AG04450 (cell line): ENCODE measurements at regions of chr5 and their contacts with region 1.

Region 1: GRCh38 chr5:141691867-141692532 is 10.0 kb upstream of the ARAP3 start:
- DNase-seq: peak; percentile 38
- H3K4me3 ChIP-seq: peak overlapping the region; percentile 59
- H3K27ac ChIP-seq: no peak overlapping the region
- H3K27me3 ChIP-seq: peaks cover 38% of the 10 kb centered on the region
- CTCF ChIP-seq: peak; percentile 97

Region 2: DNA sequence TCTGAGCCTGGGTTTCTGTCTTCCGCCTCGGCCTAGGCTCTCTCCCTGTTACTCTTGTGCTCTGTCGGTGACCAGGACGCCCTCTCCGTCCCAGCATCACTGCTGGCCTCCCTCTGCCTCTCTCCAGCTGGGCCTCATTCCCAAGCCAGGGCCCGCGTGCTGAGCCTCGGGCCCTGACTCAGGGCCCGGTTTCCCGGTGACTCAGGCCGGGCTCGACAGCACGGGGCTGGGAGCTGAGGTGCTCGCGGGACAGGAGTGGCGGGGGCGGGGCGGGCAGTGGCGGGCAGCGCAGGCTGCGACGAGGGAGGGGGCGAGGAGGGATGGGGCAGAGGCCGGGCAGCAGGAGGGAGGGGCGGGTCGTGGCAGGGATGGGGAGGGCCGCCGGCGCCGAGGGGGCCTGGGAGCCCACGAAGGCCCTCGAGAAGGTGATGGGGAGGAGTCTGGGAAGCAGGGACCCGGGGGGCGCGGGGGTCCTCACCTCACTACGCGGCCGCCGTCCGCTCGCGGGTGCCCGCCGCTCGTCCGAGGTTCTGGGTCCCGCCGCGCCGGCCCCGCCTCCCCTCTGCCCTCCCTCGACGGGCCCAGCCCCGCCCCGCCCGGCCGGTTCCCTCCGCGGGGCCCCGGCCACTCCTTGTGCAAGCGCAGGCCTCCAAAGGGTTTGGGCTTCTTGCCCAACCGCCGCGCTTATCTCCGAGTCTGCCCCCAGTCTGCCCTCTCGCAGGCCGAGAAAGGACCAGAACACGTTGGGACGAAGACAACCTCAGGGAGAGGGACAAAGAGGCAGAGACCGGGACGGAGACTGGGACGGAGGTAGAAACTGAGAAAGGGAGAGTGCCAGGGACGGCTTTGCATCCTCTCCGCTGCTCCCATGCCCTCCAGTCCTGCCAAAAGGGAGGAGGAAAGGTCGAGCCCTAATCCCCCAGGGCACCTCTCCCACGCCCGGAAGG is 10.0 kb before region 1 on chr5 and contains the start of gene ARAP3:
- CTCF ChIA-PET with region 1: interaction called, 31 read pairs
- POLR2A ChIA-PET with region 1: no interaction called
- DNase-seq: peak; percentile 43
- H3K4me3 ChIP-seq: peak within 1 kb of the TSS; percentile 54
- H3K27ac ChIP-seq: peak within 1 kb of the TSS; percentile 77
- H3K27me3 ChIP-seq: no peaks in the 10 kb centered on the region
- CTCF ChIP-seq: no peak
- polyA plus RNA-seq, gene ARAP3: 3.5 and 4.9 TPM in 2 replicates

Region 3: DNA sequence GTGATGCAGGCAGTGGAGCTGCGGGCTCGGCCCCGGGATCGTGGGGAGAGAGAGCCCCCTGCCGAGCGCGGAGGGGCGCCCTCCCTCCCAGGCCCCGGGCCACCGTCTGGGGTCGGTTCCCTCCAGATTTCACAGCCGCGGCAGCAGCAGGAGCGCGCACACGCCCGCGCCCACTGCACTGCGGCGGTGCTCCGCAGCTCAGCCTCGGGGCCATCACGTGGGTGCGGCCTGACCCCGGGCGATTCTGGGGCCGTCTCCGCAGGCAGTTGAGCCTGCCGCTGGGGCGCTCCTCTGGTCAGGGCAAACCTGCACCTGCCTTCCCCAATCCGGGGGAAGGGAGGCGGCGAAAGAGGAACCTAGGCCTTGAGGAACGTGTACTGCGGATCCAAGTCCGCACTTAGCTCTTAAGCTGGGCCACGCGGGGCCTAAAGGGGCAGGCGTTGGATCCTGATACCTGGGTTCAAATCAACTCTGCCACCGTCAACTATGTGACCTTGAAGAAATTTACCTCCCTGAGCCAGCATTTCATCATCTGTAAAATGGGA is 222.3 kb after region 1 on chr5:
- CTCF ChIA-PET with region 1: interaction called, 11 read pairs
- POLR2A ChIA-PET with region 1: no interaction called
- DNase-seq: no peak
- H3K4me3 ChIP-seq: peak overlapping the region; percentile 40
- H3K27ac ChIP-seq: no peak overlapping the region
- H3K27me3 ChIP-seq: peaks cover 45% of the 10 kb centered on the region
- CTCF ChIP-seq: peak; percentile 12; the same call in 1 of the 2 replicates

Region 4: DNA sequence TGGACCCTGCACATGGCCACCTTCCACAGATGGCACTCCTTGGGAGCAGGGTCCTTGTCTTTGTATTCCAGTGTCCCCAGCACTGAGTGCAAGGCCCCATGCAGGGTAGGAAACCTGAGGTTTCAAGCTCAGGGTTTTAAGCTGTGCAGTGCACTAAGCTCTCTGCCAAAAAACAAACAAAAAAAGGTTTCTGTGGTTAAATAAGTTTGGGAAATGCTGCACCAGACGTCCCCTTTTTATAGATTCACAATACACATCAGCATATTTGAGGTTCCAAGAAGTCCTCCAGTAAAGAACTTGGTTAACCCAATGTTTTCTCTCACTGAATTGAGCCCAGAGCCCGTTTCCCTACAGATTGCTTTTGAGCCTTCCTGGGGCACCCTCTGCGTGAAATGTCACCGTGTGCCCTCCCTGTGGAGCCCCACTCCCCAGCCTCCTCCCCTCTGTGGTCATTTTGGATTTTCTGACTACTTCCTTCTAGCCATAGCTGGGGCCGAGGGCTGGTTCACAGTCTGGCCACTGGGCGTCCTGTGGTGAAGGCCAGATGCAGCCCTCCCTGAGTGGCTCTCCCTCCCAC is 248.8 kb after region 1 on chr5:
- CTCF ChIA-PET with region 1: interaction called, 17 read pairs
- POLR2A ChIA-PET with region 1: no interaction called
- DNase-seq: no peak
- H3K4me3 ChIP-seq: no peak overlapping the region
- H3K27ac ChIP-seq: no peak overlapping the region
- H3K27me3 ChIP-seq: no peaks in the 10 kb centered on the region
- CTCF ChIP-seq: peak; percentile 24; the same call in 1 of the 2 replicates

Region 5: GRCh38 chr5:141968914-141969608 is 277.1 kb after region 1 on chr5 and contains the start of gene RNF14:
- CTCF ChIA-PET with region 1: interaction called, 422 read pairs
- POLR2A ChIA-PET with region 1: interaction called, 3 read pairs
- DNase-seq: peak; percentile 73
- H3K4me3 ChIP-seq: peak within 1 kb of the TSS; percentile 70
- H3K27ac ChIP-seq: peak within 1 kb of the TSS; percentile 94
- H3K27me3 ChIP-seq: no peaks in the 10 kb centered on the region
- CTCF ChIP-seq: peak; percentile 63
- polyA plus RNA-seq, gene RNF14: 38.1 and 39.0 TPM in 2 replicates